Motor neuron (in vitro differentiated cells): ENCODE measurements at regions of chrX and their contacts with region 1.

Region 1: DNA sequence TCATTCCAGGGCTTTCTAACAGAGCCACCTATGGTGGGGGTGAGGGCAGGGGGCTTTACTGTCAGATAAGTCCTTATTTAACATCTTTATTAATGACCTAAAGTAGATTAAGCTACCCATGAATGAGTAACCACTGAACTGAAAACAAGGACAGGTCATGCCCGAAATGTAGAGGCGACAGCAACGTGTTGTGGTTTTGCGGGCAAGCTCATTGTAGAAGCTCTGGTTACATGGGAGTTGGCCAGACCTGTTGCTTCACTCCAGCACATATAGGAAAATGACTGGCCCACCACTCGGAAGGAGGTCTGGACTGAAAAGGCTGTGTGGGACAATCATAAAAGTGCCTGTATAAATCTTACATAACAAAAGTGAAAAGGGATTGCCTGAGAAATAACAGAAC is 109.6 kb upstream of the NDP start:
- ATAC-seq: no peak
- H3K4me3 ChIP-seq: no peak overlapping the region
- H3K27ac ChIP-seq: no peak overlapping the region
- H3K4me1 ChIP-seq: no peaks in the 10 kb centered on the region

Region 2: GRCh38 chrX:43238461-43238945 is 844.3 kb before region 1 on chrX:
- in situ Hi-C with region 1: no loop called
- ATAC-seq: no peak
- H3K4me3 ChIP-seq: no peak overlapping the region
- H3K27ac ChIP-seq: no peak overlapping the region
- H3K4me1 ChIP-seq: no peaks in the 10 kb centered on the region

Region 3: GRCh38 chrX:43974741-43975465 is 107.9 kb before region 1 on chrX:
- in situ Hi-C with region 1: loop called in 1 of 9 experiments (anchors 25 kb)
- ATAC-seq: no peak
- H3K4me3 ChIP-seq: no peak overlapping the region
- H3K27ac ChIP-seq: no peak overlapping the region
- H3K4me1 ChIP-seq: peaks cover 9 to 18% of the 10 kb centered on the region in 2 donors

Region 4: DNA sequence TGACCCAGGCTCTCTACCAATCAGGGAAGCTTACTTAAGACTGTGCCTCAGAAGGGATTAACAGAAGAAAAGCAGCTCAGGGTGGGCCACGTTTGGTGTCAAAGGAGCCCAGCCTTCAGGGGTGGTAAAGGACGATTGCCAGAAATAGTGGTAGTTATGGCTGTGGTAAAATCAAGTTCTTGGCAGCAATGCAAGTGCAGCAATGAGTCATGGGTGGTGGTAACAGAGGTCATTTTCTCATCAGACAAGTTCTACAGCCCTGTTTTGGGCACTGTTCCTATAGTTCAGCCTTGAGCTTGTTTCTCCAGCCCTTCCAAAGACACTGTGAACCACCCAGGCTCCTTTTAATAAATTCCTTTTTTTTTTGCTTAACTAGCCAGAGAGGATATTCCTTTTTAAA is 140.3 kb after region 1 on chrX:
- in situ Hi-C with region 1: loop called in 1 of 9 experiments (anchors 25 kb)
- ATAC-seq: peak in 2 of 8 experiments; percentile 27 to 33
- H3K4me3 ChIP-seq: no peak overlapping the region
- H3K27ac ChIP-seq: no peak overlapping the region
- H3K4me1 ChIP-seq: peaks cover 0 to 7% of the 10 kb centered on the region in 2 donors